ENCODE measurements at regions of chr1 and their contacts with region 1.

Region 1: DNA sequence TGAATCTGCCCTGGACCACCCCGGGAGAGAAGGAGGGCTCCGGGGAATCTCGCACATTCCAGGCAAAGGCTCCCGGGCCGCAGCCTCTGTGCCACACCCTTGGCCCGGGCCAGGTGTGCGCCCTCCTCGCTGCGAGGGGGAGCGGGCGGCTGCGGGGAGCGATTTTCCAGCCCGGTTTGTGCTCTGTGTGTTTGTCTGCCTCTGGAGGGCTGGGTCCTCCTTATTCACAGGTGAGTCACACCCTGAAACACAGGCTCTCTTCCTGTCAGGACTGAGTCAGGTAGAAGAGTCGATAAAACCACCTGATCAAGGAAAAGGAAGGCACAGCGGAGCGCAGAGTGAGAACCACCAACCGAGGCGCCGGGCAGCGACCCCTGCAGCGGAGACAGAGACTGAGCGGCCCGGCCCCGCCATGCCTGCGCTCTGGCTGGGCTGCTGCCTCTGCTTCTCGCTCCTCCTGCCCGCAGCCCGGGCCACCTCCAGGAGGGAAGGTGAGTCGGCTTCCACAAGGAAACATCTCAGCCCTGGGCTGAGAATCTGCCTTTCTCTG is at the start of gene LAMC2:
- DNase-seq: peak; percentile 96
- H3K4me3 Mint-ChIP-seq: peak within 1 kb of the TSS; percentile 68
- H3K27ac Mint-ChIP-seq: peak within 1 kb of the TSS; percentile 75
- H3K4me1 Mint-ChIP-seq: peaks cover 59% of the 10 kb centered on the region
- H3K27me3 Mint-ChIP-seq: no peaks in the 10 kb centered on the region
- CTCF ChIP-seq: peak; percentile 44
- total RNA-seq, gene LAMC2: 498 and 642 TPM in 2 replicates

Region 2: DNA sequence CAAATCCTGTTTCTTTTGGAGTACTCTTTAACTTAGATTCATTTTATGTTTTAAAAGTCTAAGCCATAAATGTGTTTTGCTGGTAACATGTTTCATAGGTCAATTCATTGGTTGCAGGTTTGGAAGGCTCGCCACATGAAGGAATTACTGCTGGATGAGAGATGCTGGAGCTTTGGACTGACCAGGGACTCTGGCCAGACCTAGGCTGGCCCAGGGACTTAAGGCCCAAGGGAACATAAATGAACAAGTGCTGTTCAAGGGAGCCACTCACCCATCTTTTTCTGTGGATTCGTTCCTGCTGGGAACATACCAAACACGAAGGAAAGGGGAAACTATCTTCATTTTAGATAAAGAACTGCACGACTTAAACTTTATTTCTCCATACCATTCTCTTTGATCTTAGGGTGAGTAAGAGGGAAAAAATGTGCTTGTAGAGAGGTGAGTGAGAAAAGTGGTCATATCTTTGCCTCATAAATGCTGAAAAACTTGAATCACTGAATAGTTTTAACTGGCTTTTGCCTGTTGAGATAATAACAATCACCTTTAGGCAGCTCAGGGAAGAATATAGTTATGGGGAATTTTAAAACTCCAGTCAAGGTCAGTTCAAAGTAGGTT is 217.8 kb before region 1 on chr1:
- CTCF ChIA-PET with region 1: no interaction called
- intact Hi-C with region 1: loop called (anchors 1 kb)
- DNase-seq: no peak
- H3K4me3 Mint-ChIP-seq: peak overlapping the region; percentile 19
- H3K27ac Mint-ChIP-seq: peak overlapping the region; percentile 53
- H3K4me1 Mint-ChIP-seq: peaks cover 61% of the 10 kb centered on the region
- H3K27me3 Mint-ChIP-seq: no peaks in the 10 kb centered on the region
- CTCF ChIP-seq: no peak

Region 3: DNA sequence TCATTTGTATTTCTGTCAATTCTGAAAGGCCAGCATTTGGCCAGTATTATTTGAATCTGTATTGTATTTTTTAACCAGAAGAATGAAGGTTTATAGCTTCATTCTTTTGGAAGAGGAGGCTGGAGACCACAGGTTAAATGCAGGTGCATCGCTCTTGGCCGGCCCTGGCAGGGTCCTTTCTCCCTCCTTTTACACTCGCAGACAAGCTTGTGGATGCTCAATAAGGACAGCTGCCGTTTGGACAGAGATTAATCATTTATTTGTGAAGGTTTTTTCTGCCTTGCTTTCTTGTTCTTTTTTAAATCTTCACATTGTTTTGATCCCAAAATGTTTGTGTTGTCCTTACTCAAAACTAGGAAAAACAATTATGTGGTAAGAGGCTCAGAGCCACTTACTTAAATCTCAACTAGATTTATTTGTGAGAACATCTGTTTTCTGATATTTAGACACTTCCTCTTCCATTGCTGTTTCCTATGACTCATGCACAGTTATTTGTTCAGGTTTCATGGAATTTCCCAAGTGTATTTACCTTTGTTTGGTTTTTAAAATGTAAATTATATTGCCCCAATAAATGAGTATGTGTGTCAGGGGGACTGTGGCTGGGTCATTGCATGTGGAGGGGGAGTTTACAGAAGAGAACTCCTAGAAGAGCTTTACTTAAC is 46.6 kb before region 1 on chr1:
- CTCF ChIA-PET with region 1: interaction called, 4 read pairs
- intact Hi-C with region 1: loop called (anchors 2 kb)
- DNase-seq: no peak
- H3K4me3 Mint-ChIP-seq: peak overlapping the region; percentile 42
- H3K27ac Mint-ChIP-seq: peak overlapping the region; percentile 93
- H3K4me1 Mint-ChIP-seq: peaks cover 30% of the 10 kb centered on the region
- H3K27me3 Mint-ChIP-seq: no peaks in the 10 kb centered on the region
- CTCF ChIP-seq: no peak